Right ventricle myocardium inferior (tissue), 1 donor: ENCODE measurements at regions of chr7 and their contacts with region 1.

Region 1: GRCh38 chr7:35694781-35695472 is at the start of gene HERPUD2:
- DNase-seq: peak; percentile 98
- ATAC-seq: peak; percentile 98
- total RNA-seq, gene HERPUD2: 17.9 TPM

Region 2: DNA sequence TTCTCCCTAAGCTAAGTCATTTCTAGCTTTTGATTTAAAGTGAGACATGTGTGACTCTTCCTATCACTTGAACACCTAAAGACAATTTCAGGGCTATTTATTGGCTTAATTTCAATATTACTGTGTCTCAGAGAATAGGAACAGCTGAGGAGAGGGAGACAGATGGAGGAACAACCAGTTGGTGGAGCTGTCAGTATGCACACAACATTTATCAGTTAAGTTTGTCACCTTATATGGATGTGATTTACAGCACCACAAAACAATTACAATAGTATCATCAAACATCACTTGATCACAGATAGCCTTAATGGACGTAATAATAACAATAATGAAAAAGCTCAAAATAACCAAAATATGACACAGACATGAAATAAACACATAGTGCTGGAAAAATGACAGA is 907.4 kb before region 1 on chr7:
- intact Hi-C with region 1: no loop called
- DNase-seq: no peak
- ATAC-seq: no peak

Region 3: GRCh38 chr7:35647171-35647574 is 47.8 kb before region 1 on chr7:
- intact Hi-C with region 1: loop called (anchors 5 kb)
- DNase-seq: no peak
- ATAC-seq: peak; percentile 77

Region 4: DNA sequence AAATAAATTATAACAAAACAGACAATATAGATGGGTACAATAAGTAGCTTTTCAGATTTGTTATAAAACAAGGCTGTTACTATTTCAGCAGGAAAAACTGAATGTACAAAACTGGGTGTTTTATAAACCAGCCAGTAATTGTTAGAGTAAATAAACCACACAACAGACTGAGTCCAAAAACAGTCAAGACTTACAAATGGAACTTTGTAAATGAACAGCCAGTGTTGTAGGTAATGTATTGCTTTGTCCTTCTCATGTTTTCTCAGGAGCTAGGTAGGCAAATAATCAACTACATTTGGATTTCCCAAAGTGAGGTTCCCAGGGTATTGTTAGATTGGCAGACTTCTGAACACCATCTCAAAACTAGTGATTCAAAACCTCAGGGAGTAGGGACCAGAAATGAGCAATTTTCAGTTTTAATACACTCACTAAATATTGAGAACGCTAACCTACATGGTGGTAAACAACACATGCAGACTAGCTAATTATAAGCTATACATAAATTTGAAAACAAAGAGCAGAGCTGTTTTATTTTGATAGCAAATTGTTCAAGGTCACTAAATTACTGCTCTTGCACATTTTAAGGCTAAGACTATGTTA is 36.2 kb before region 1 on chr7:
- intact Hi-C with region 1: no loop called
- DNase-seq: no peak
- ATAC-seq: no peak

Region 5: GRCh38 chr7:35869810-35870209 is 174.9 kb after region 1 on chr7:
- intact Hi-C with region 1: no loop called
- DNase-seq: no peak
- ATAC-seq: peak; percentile 63

Region 6: GRCh38 chr7:36303202-36304098 is 608.5 kb after region 1 on chr7:
- intact Hi-C with region 1: loop called (anchors 10 kb)
- DNase-seq: peak; percentile 85
- ATAC-seq: peak; percentile 85